Vagina (tissue), 2 donors: ENCODE measurements at regions of chr7 and their contacts with region 1.

Region 1: GRCh38 chr7:147071536-147071935 is 954.9 kb downstream of the CNTNAP2 start:
- DNase-seq: no peak
- H3K4me3 ChIP-seq: no peak overlapping the region
- H3K27ac ChIP-seq: no peak overlapping the region
- H3K4me1 ChIP-seq: no peaks in the 10 kb centered on the region
- H3K27me3 ChIP-seq: no peaks in the 10 kb centered on the region
- CTCF ChIP-seq: no peak
- POLR2A ChIP-seq: no peak

Region 2: DNA sequence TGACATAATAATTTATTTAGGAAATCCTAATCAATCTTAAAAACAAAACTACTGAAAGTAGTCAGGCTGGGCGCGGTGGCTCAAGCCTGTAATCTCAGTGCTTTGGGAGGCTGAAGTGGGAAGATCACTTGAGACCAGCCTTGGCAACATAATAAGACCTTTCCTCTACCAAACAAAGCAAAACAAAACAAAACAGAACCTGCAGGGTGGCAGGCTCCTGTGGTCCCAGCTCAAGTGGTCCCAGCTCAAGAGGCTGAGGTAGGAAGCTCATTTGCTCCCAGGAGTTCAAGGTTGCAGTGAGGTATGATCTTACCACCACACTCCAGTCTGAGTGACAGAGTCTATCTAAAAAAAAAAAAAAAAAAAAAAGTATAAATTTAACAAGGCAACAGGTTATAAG is 206.9 kb before region 1 on chr7:
- intact Hi-C with region 1: no loop called
- DNase-seq: no peak
- H3K4me3 ChIP-seq: no peak overlapping the region
- H3K27ac ChIP-seq: no peak overlapping the region
- H3K4me1 ChIP-seq: no peaks in the 10 kb centered on the region
- H3K27me3 ChIP-seq: no peaks in the 10 kb centered on the region
- CTCF ChIP-seq: no peak
- POLR2A ChIP-seq: no peak

Region 3: GRCh38 chr7:147103224-147103623 is 31.7 kb after region 1 on chr7:
- intact Hi-C with region 1: loop called (anchors 1 kb)
- DNase-seq: no peak
- H3K4me3 ChIP-seq: no peak overlapping the region
- H3K27ac ChIP-seq: no peak overlapping the region
- H3K4me1 ChIP-seq: no peaks in the 10 kb centered on the region
- H3K27me3 ChIP-seq: no peaks in the 10 kb centered on the region
- CTCF ChIP-seq: no peak
- POLR2A ChIP-seq: no peak

Region 4: GRCh38 chr7:148173369-148173768 is 1101.8 kb after region 1 on chr7:
- intact Hi-C with region 1: no loop called
- DNase-seq: no peak
- H3K4me3 ChIP-seq: no peak overlapping the region
- H3K27ac ChIP-seq: no peak overlapping the region
- H3K4me1 ChIP-seq: no peaks in the 10 kb centered on the region
- H3K27me3 ChIP-seq: no peaks in the 10 kb centered on the region
- CTCF ChIP-seq: no peak
- POLR2A ChIP-seq: no peak